Activated CD4-positive, alpha-beta memory T cell treated with anti-CD3 and anti-CD28 coated beads, Interleukin-2, amount 10 ng/mL, durations not matched to agents 7 days and 5 days (primary cell): ENCODE measurements at regions of chr5 and their contacts with region 1.

Region 1: GRCh38 chr5:175517818-175518450 is 39.6 kb downstream of the SFXN1 start:
- DNase-seq: peak; percentile 83
- H3K4me3 Mint-ChIP-seq: peak overlapping the region; percentile 64
- H3K27ac Mint-ChIP-seq: peak overlapping the region; percentile 94
- H3K4me1 Mint-ChIP-seq: peaks cover 77% of the 10 kb centered on the region
- H3K27me3 Mint-ChIP-seq: no peaks in the 10 kb centered on the region

Region 2: DNA sequence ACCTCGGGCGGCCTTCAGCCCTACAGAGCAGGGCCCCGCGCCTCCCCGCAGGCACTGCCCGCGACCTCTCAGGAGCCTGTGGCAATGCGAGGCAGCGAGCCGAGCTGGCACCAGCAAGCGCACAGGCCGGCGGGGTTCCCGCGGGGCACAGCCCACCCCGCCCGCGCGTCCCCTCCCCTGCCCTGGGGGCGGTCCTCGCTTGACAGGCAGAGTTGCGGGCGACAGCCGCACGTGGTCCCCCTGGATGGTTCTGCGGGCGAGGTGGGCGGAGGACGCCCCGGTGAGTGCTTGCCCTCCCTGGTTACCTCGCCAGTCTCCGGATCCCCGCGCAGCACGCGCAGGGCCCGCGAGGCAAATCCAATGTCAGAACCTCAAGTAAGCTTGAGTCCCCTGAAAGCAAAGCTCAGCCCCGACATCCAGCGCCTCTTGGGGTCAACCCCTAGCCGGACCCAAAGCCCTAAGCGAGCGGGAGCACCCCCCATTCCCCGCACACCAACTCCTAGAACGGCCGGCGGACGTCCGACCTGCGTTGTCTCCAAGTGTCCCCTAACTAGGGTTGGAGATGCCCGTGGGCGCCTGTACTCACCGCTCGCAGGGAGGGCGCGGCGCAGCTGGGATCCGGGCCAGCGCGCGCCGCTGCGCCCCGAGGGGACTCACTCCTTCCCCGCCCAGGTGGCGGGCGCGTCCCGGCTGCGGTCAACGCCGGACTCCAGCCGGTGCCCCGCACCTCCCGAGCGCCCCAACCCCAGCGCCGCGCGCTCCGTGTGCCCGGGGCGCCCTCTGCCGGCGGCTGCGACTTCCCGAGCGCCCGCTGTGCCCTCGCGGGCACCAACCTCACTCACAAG is 73.7 kb before region 1 on chr5 and contains the start of gene DRD1:
- CTCF ChIA-PET with region 1: no interaction called
- POLR2A ChIA-PET with region 1: no interaction called
- DNase-seq: peak; percentile 49
- H3K4me3 Mint-ChIP-seq: no peak within 1 kb of the TSS
- H3K27ac Mint-ChIP-seq: no peak within 1 kb of the TSS
- H3K4me1 Mint-ChIP-seq: peaks cover 5% of the 10 kb centered on the region
- H3K27me3 Mint-ChIP-seq: peaks cover 69% of the 10 kb centered on the region
- total RNA-seq, gene DRD1: not detected

Region 3: GRCh38 chr5:175464074-175464941 is 53.6 kb before region 1 on chr5:
- CTCF ChIA-PET with region 1: interaction called, 11 read pairs
- POLR2A ChIA-PET with region 1: no interaction called
- DNase-seq: peak; percentile 77
- H3K4me3 Mint-ChIP-seq: no peak overlapping the region
- H3K27ac Mint-ChIP-seq: no peak overlapping the region
- H3K4me1 Mint-ChIP-seq: peaks cover 7% of the 10 kb centered on the region
- H3K27me3 Mint-ChIP-seq: peaks cover 4% of the 10 kb centered on the region

Region 4: GRCh38 chr5:175652741-175653663 is 135.1 kb after region 1 on chr5:
- CTCF ChIA-PET with region 1: no interaction called
- POLR2A ChIA-PET with region 1: interaction called, 12 read pairs
- DNase-seq: peak; percentile 90
- H3K4me3 Mint-ChIP-seq: peak overlapping the region; percentile 62
- H3K27ac Mint-ChIP-seq: peak overlapping the region; percentile 80
- H3K4me1 Mint-ChIP-seq: peaks cover 69% of the 10 kb centered on the region
- H3K27me3 Mint-ChIP-seq: peaks cover 23% of the 10 kb centered on the region